Panc1 (cell line): ENCODE measurements at regions of chr15 and their contacts with region 1.

Region 1: DNA sequence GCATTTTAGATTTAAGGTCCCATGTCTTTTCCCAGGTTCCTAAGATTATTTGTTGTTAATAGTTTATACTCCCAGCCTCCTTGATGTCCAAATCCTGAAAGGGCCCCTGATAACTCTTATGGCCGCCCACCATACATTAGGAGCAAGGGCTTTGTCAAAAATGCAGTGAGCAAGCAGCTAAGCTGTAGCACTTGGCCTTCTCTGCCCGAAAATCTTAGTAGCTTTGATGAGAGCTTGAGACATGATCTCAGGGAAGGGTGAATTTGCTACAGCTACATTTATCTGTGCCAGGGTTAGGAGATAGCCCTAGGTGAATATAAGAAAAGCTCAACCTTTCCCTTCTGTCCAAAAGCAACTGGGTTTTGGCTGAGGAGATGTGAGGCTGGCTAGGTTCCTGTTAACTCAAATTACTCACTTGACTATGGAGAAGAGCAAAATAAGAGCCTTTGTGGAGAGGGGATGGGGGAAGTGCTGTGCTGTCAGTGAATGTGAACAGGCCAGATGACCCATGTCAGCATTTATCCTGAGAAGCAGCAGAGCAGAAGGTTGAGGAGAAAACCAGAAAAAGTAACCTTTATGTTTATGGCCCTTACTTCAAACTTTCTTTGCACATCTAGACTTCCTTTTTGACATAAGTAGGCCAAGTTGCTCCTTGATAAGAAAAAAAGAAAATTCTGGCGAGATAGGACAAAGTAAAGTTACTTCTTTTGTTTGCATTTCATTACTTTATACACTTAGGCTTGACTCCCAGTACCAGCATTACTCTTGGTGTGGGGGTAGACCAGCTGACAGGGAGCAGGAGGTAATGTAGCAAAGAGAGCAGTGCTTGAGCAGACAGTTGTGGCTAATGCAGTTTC is 21.1 kb downstream of the MAPK6 start:
- DNase-seq: no peak
- ATAC-seq: peak; percentile 36; the same call in 1 of the 2 replicates
- H3K4me3 ChIP-seq: no peak overlapping the region
- H3K27ac ChIP-seq: no peak overlapping the region
- H3K4me1 ChIP-seq: peaks cover 48% of the 10 kb centered on the region
- H3K27me3 ChIP-seq: no peaks in the 10 kb centered on the region
- CTCF ChIP-seq: no peak

Region 2: DNA sequence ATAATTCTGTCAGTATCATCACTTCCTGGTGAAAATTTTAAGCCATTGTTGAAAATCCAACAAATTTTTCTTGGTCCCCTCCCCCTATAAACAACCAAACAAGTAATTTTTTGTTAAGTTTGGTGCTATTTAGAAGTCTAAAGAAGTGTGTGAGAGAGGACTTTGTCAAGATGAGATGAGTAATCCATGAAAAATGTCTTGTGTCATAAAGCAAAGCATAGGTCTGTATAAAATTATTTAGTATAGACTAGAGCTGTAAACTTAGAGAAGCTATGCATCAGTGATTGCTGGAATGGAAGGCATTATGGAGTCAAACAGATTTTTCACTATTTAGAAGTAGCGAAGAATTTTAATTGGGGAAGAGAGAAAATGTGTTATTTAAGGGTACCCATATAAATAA is 10.3 kb after region 1 on chr15:
- CTCF ChIA-PET with region 1: no interaction called
- POLR2A ChIA-PET with region 1: interaction called, 11 read pairs
- in situ Hi-C with region 1: no loop called
- intact Hi-C with region 1: no loop called
- DNase-seq: no peak
- ATAC-seq: no peak
- H3K4me3 ChIP-seq: no peak overlapping the region
- H3K27ac ChIP-seq: no peak overlapping the region
- H3K4me1 ChIP-seq: peaks cover 19% of the 10 kb centered on the region
- H3K27me3 ChIP-seq: no peaks in the 10 kb centered on the region
- CTCF ChIP-seq: no peak